Adrenal gland (tissue), 19 donors: ENCODE measurements at regions of chr11 and their contacts with region 1.

Region 1: GRCh38 chr11:72293910-72294615 is 50.1 kb upstream of the PHOX2A start:
- DNase-seq: peak in 1 of 7 donors; percentile 49
- H3K4me3 ChIP-seq: no peak overlapping the region
- H3K27ac ChIP-seq: no peak overlapping the region
- H3K4me1 ChIP-seq: no peaks in the 10 kb centered on the region
- H3K27me3 ChIP-seq: no peaks in the 10 kb centered on the region
- CTCF ChIP-seq: no peak
- POLR2A ChIP-seq: no peak

Region 2: DNA sequence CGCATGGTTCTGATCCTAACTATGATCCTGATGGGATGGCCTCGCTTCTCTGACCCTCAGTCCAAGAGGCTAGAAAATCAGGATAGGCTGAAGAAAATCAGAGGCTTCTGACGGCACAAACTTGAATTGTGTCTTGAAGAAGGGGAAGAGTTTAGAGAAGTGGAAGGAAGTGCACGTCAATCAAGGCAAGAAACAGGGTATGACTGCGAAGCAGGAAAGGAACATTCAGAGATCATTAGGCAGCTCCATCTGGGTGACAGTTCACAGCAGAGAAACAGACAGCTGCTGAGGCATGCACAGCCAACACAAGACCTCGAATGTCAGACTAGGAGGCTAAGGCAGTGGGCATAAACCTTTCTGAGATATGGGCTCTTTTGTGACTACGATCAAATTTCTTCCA is 110.9 kb after region 1 on chr11:
- intact Hi-C with region 1: loop called in 1 of 2 experiments (anchors 10 kb)
- DNase-seq: peak in 3 of 7 donors; percentile 15 to 51 (median 16)
- H3K4me3 ChIP-seq: no peak overlapping the region
- H3K27ac ChIP-seq: no peak overlapping the region
- H3K4me1 ChIP-seq: peaks cover 0 to 5% of the 10 kb centered on the region in 2 donors
- H3K27me3 ChIP-seq: no peaks in the 10 kb centered on the region
- CTCF ChIP-seq: no peak
- POLR2A ChIP-seq: no peak

Region 3: GRCh38 chr11:72425053-72425980 is 131.3 kb after region 1 on chr11:
- intact Hi-C with region 1: loop called in 1 of 2 experiments (anchors 10 kb)
- DNase-seq: peak in 1 of 7 donors; percentile 41
- H3K4me3 ChIP-seq: no peak overlapping the region
- H3K27ac ChIP-seq: no peak overlapping the region
- H3K4me1 ChIP-seq: peaks cover 0 to 14% of the 10 kb centered on the region in 2 donors
- H3K27me3 ChIP-seq: no peaks in the 10 kb centered on the region
- CTCF ChIP-seq: no peak
- POLR2A ChIP-seq: no peak